Esophagus squamous epithelium (tissue), 5 donors: ENCODE measurements at regions of chr1 and their contacts with region 1.

Region 1: DNA sequence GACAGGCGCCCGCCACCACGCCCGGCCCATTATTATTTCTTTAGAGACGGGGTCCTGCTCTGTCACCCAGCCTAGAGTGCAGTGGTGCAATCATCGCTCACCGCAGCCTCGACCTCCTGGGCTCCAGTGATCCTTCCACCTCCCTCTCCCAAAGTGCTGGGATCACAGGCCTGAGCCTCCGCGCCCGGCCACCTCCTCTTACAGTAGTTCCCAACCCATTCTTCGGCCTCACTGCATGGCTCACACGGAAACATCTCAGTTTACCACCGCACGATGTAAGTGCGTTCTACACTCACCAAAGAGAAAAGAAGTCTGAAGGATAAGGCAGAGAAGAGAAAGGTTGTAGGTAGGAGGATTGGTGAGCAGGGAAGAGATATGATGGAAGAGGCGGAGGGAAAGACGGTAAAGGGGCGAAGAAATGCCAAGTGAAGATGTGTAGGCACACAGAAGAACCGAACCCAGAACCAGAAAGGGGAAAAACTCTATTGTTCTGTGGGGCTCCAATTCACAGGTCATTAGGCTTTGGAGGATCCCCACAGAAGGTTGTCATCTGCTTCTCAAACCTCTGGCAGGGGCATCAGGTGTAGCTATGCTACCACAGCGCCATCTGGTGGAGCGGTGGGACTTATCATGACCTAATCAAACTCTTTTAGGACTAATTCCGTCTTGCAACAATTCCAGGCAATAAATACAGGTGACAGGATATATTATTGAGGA is 504.2 kb downstream of the SMYD3 start:
- DNase-seq: peak; percentile 16
- H3K4me3 ChIP-seq: no peak overlapping the region
- H3K27ac ChIP-seq: no peak overlapping the region
- H3K4me1 ChIP-seq: peaks cover 0 to 29% (median 1%) of the 10 kb centered on the region in 3 donors
- H3K27me3 ChIP-seq: no peaks in the 10 kb centered on the region
- CTCF ChIP-seq: peak; percentile 82 to 89 (median 84)
- POLR2A ChIP-seq: no peak

Region 2: GRCh38 chr1:245156081-245156735 is 846.7 kb before region 1 on chr1:
- intact Hi-C with region 1: loop called (anchors 5 kb)
- DNase-seq: no peak
- H3K4me3 ChIP-seq: peak overlapping the region; percentile 48 to 79 (median 56)
- H3K27ac ChIP-seq: no peak overlapping the region
- H3K4me1 ChIP-seq: peaks cover 32 to 46% (median 37%) of the 10 kb centered on the region in 3 donors
- H3K27me3 ChIP-seq: peaks cover 0 to 80% (median 0%) of the 10 kb centered on the region in 4 donors
- CTCF ChIP-seq: peak; percentile 62 to 93 (median 76)
- POLR2A ChIP-seq: peak in 1 of 4 donors; percentile 22